ENCODE measurements at regions of chr5 and their contacts with region 1.

Region 1: DNA sequence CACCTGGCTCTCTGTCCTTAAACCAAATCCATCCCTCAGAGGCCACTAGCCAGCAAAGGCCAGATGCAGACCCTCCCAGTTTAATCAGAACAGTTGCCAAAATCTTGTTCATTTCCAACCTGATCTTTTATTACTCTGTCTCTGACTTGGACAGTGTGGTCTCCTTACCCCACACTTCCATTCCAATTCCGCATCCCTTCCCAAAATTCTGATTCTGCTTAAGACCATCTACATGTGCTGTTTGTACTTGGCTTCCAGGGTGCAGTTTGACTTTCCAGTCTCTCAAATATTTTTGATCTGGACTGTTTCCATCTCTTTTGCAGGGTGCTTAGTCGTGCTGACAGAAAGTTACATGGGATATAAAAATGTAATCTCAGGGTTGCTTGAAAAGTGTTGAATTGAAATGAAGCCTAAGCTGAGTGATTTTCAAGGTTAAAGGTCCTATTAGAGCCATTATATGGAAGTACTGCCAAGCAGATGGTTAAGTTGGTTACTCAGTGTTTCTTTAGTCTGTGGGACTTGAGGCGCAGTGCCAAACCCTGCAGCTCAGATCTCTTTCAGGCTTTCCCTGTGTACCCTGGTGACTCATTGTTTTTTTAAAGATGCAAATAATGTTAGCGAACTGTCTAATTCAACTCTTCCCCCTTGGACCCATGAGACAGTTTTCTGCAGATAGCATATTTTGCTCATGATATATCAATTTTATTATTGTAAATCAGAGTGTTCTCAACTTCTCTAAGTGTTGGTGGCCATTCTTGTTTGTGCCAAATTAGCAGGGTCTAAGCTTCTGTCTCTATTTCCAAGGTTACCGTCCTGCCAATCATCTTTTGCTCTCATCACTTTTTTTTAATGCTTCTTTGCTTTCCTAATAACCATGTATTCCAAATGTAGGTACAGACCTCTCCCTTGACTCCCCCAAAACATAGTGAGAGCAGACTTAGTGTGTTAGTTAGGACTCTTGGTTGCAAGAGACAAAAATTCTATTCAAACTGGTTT is 18.2 kb upstream of the DCP2 start:
- DNase-seq: no peak
- H3K4me3 Mint-ChIP-seq: no peak overlapping the region
- H3K27ac Mint-ChIP-seq: no peak overlapping the region
- H3K4me1 Mint-ChIP-seq: peaks cover 39% of the 10 kb centered on the region
- H3K27me3 Mint-ChIP-seq: no peaks in the 10 kb centered on the region

Region 2: GRCh38 chr5:112878760-112879159 is 79.6 kb before region 1 on chr5:
- intact Hi-C with region 1: loop called (anchors 5 kb)
- DNase-seq: peak; percentile 54
- H3K4me3 Mint-ChIP-seq: peak overlapping the region; percentile 9
- H3K27ac Mint-ChIP-seq: peak overlapping the region; percentile 71
- H3K4me1 Mint-ChIP-seq: peaks cover 35% of the 10 kb centered on the region
- H3K27me3 Mint-ChIP-seq: no peaks in the 10 kb centered on the region

Region 3: GRCh38 chr5:112930082-112930344 is 28.4 kb before region 1 on chr5:
- intact Hi-C with region 1: loop called (anchors 2 kb)
- DNase-seq: no peak
- H3K4me3 Mint-ChIP-seq: peak overlapping the region; percentile 43
- H3K27ac Mint-ChIP-seq: peak overlapping the region; percentile 71
- H3K4me1 Mint-ChIP-seq: peaks cover 50% of the 10 kb centered on the region
- H3K27me3 Mint-ChIP-seq: no peaks in the 10 kb centered on the region

Measured in activated T-helper 2 cell treated with anti-CD3 and anti-CD28 coated beads, Interferon-gamma antibody, Interleukin-2, Interleukin-4, amounts not matched to agents 10 μg/mL and 5 μg/mL and 100 μg/mL, durations not matched to agents 14 hours and 24 hours and 36 hours (primary cell).